ENCODE measurements at regions of chr5 and their contacts with region 1.

Region 1: DNA sequence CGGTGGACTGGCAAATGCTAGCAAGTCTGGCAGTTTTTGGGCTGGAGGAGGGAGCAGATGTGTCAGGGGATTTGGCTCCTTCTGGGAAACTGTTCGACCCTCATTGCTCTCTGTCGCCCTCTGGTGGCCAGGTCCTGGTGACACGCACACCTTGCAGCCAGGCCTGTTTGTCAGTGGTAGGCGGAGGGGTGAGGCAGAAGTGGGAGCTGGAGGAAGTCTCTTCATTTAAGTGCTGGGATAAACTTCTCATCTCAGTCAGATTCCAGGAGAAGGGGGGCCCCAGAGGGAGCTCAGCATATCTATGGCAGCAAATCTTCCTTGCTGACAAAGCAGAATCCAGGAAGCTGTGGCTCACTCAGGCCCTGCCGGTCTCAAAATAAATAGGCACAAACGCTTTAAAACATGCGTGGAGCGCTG is 326.5 kb downstream of the ZSWIM6 start:
- DNase-seq: peak; percentile 82
- H3K4me3 ChIP-seq: no peak overlapping the region
- H3K27ac ChIP-seq: no peak overlapping the region
- H3K4me1 ChIP-seq: no peaks in the 10 kb centered on the region
- H3K27me3 ChIP-seq: no peaks in the 10 kb centered on the region
- CTCF ChIP-seq: peak; percentile 89 to 98 (median 92)
- POLR2A ChIP-seq: no peak

Region 2: DNA sequence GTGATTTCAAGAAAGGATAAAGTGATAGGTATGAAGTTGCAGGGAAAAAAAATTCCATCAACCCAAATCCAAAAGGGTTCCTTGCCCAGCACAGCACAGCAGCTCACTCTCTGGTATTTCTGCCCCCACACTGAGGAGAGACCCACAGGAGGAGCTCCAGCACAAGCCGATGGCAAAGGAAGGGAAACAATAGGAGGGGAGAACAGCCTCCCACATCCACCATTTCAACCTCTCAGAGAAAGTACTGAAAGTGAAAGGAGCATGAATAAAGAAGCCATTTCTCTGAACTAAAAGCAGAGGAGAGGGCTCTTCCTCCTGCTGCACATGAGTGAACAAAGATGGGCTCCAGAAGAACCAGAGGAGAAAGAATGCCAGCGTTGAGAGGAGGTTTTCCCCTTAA is 381.4 kb before region 1 on chr5:
- intact Hi-C with region 1: loop called (anchors 5 kb)
- DNase-seq: no peak
- H3K4me3 ChIP-seq: no peak overlapping the region
- H3K27ac ChIP-seq: no peak overlapping the region
- H3K4me1 ChIP-seq: no peaks in the 10 kb centered on the region
- H3K27me3 ChIP-seq: no peaks in the 10 kb centered on the region
- CTCF ChIP-seq: peak in 1 of 4 experiments; percentile 26
- POLR2A ChIP-seq: no peak

Region 3: GRCh38 chr5:61551637-61552313 is 106.8 kb before region 1 on chr5:
- intact Hi-C with region 1: no loop called
- DNase-seq: no peak
- H3K4me3 ChIP-seq: no peak overlapping the region
- H3K27ac ChIP-seq: no peak overlapping the region
- H3K4me1 ChIP-seq: no peaks in the 10 kb centered on the region
- H3K27me3 ChIP-seq: no peaks in the 10 kb centered on the region
- CTCF ChIP-seq: no peak
- POLR2A ChIP-seq: no peak

Region 4: GRCh38 chr5:61609840-61610677 is 48.5 kb before region 1 on chr5:
- intact Hi-C with region 1: loop called (anchors 5 kb)
- DNase-seq: no peak
- H3K4me3 ChIP-seq: no peak overlapping the region
- H3K27ac ChIP-seq: no peak overlapping the region
- H3K4me1 ChIP-seq: no peaks in the 10 kb centered on the region
- H3K27me3 ChIP-seq: no peaks in the 10 kb centered on the region
- CTCF ChIP-seq: no peak
- POLR2A ChIP-seq: no peak

Region 5: GRCh38 chr5:61631438-61631941 is 27.1 kb before region 1 on chr5:
- intact Hi-C with region 1: no loop called
- DNase-seq: no peak
- H3K4me3 ChIP-seq: no peak overlapping the region
- H3K27ac ChIP-seq: peak overlapping the region in 1 of 2 donors; percentile 43
- H3K4me1 ChIP-seq: no peaks in the 10 kb centered on the region
- H3K27me3 ChIP-seq: no peaks in the 10 kb centered on the region
- CTCF ChIP-seq: no peak
- POLR2A ChIP-seq: no peak

Measured in prostate gland (tissue), 2 donors.